ENCODE measurements at regions of chr17 and their contacts with region 1.

Region 1: GRCh38 chr17:27236717-27237315 is 57.1 kb upstream of the WSB1 start:
- DNase-seq: no peak
- ATAC-seq: peak; percentile 50
- H3K4me3 ChIP-seq: no peak overlapping the region
- H3K27ac ChIP-seq: no peak overlapping the region
- H3K4me1 ChIP-seq: peaks cover 28% of the 10 kb centered on the region
- H3K27me3 ChIP-seq: no peaks in the 10 kb centered on the region
- CTCF ChIP-seq: peak; percentile 81 to 88 (median 87)
- EP300 ChIP-seq: no peak
- POLR2A ChIP-seq: no peak
- RAD21 ChIP-seq: peak; percentile 94

Region 2: GRCh38 chr17:27206447-27206846 is 30.4 kb before region 1 on chr17:
- CTCF ChIA-PET with region 1: interaction called, 79 read pairs
- POLR2A ChIA-PET with region 1: no interaction called
- RAD21 ChIA-PET with region 1: interaction called, 27 read pairs
- SMC1A ChIA-PET with region 1: interaction called, 35 read pairs
- in situ Hi-C with region 1: no loop called
- intact Hi-C with region 1: no loop called
- DNase-seq: no peak
- ATAC-seq: peak; percentile 76
- H3K4me3 ChIP-seq: no peak overlapping the region
- H3K27ac ChIP-seq: no peak overlapping the region
- H3K4me1 ChIP-seq: no peaks in the 10 kb centered on the region
- H3K27me3 ChIP-seq: no peaks in the 10 kb centered on the region
- CTCF ChIP-seq: peak; percentile 9 to 55 (median 41); a peak in 4 of 6 replicates
- EP300 ChIP-seq: no peak
- POLR2A ChIP-seq: no peak
- RAD21 ChIP-seq: peak; percentile 19; the same call in 1 of the 2 replicates

Region 3: GRCh38 chr17:27293898-27294688 is 57.3 kb after region 1 on chr17 and contains the start of gene WSB1:
- CTCF ChIA-PET with region 1: interaction called, 80 read pairs
- POLR2A ChIA-PET with region 1: interaction called, 6 read pairs
- RAD21 ChIA-PET with region 1: interaction called, 20 read pairs
- SMC1A ChIA-PET with region 1: interaction called, 14 read pairs
- in situ Hi-C with region 1: no loop called
- intact Hi-C with region 1: loop called (anchors 2 kb)
- DNase-seq: peak; percentile 61
- ATAC-seq: peak; percentile 83
- H3K4me3 ChIP-seq: peak within 1 kb of the TSS; percentile 86
- H3K27ac ChIP-seq: peak within 1 kb of the TSS; percentile 97
- H3K4me1 ChIP-seq: peaks cover 11% of the 10 kb centered on the region
- H3K27me3 ChIP-seq: no peaks in the 10 kb centered on the region
- CTCF ChIP-seq: no peak
- EP300 ChIP-seq: peak; percentile 20 to 57; a peak in 2 of 4 replicates
- POLR2A ChIP-seq: peak; percentile 100
- RAD21 ChIP-seq: no peak
- polyA plus RNA-seq, gene WSB1: 26.6 to 49.8 TPM

Region 4: GRCh38 chr17:27339836-27340550 is 103.2 kb after region 1 on chr17:
- CTCF ChIA-PET with region 1: interaction called, 40 read pairs
- POLR2A ChIA-PET with region 1: no interaction called
- RAD21 ChIA-PET with region 1: interaction called, 156 read pairs
- SMC1A ChIA-PET with region 1: interaction called, 77 read pairs
- in situ Hi-C with region 1: loop called (anchors 5 kb)
- intact Hi-C with region 1: no loop called
- DNase-seq: no peak
- ATAC-seq: peak; percentile 46
- H3K4me3 ChIP-seq: peak overlapping the region; percentile 53; the same call in 1 of the 2 replicates
- H3K27ac ChIP-seq: peak overlapping the region; percentile 78
- H3K4me1 ChIP-seq: peaks cover 41% of the 10 kb centered on the region
- H3K27me3 ChIP-seq: no peaks in the 10 kb centered on the region
- CTCF ChIP-seq: no peak
- EP300 ChIP-seq: no peak
- POLR2A ChIP-seq: no peak
- RAD21 ChIP-seq: no peak

Region 5: DNA sequence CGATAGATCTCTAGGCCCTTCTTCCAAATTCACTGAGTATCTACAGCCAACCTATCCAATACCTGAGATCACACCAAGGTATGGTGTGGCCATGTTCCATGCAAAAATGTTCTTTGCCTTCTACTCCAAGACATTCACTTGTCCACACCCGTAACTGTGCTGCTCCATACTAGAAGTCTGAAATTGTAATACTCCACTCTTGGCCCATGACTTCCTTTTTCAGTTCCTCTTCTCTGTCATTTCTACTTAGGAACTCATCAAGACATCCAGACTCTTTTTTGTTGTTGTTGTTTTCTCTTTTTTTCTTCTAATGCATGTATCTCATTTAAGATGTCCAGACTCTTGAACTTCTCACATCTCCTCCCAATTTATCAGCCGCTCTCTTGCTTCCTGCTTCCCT is 177.0 kb after region 1 on chr17:
- CTCF ChIA-PET with region 1: interaction called, 8 read pairs
- POLR2A ChIA-PET with region 1: no interaction called
- RAD21 ChIA-PET with region 1: no interaction called
- SMC1A ChIA-PET with region 1: interaction called, 3 read pairs
- in situ Hi-C with region 1: loop called (anchors 10 kb)
- intact Hi-C with region 1: no loop called
- DNase-seq: no peak
- ATAC-seq: peak; percentile 74
- H3K4me3 ChIP-seq: no peak overlapping the region
- H3K27ac ChIP-seq: no peak overlapping the region
- H3K4me1 ChIP-seq: peaks cover 14% of the 10 kb centered on the region
- H3K27me3 ChIP-seq: peaks cover 1 to 2% of the 10 kb centered on the region in 2 experiments; a peak in 1 of 4 replicates
- CTCF ChIP-seq: no peak
- EP300 ChIP-seq: no peak
- POLR2A ChIP-seq: no peak
- RAD21 ChIP-seq: no peak

Region 6: GRCh38 chr17:27532269-27533263 is 295.8 kb after region 1 on chr17:
- CTCF ChIA-PET with region 1: no interaction called
- POLR2A ChIA-PET with region 1: no interaction called
- RAD21 ChIA-PET with region 1: no interaction called
- SMC1A ChIA-PET with region 1: no interaction called
- in situ Hi-C with region 1: no loop called
- intact Hi-C with region 1: no loop called
- DNase-seq: no peak
- ATAC-seq: no peak
- H3K4me3 ChIP-seq: no peak overlapping the region
- H3K27ac ChIP-seq: no peak overlapping the region
- H3K4me1 ChIP-seq: peaks cover 8% of the 10 kb centered on the region
- H3K27me3 ChIP-seq: no peaks in the 10 kb centered on the region
- CTCF ChIP-seq: no peak
- EP300 ChIP-seq: no peak
- POLR2A ChIP-seq: no peak
- RAD21 ChIP-seq: no peak

Region 7: DNA sequence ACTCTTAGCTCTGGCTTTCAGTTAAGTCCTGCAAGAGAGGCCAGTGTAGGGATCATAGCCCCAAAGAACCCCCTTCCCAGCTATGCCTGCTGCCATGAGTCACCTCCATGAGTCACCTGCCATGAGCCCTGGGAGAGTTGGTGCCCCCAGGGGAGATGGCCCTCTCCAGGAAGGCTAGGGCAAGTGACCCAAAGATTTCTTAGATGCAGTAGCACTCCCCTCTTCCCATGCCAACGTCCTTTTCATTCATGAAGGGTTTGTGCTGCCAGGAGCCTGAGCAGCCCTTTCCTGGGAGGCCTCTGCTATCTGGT is 315.6 kb after region 1 on chr17:
- CTCF ChIA-PET with region 1: no interaction called
- POLR2A ChIA-PET with region 1: no interaction called
- RAD21 ChIA-PET with region 1: no interaction called
- SMC1A ChIA-PET with region 1: no interaction called
- in situ Hi-C with region 1: no loop called
- intact Hi-C with region 1: no loop called
- DNase-seq: no peak
- ATAC-seq: no peak
- H3K4me3 ChIP-seq: no peak overlapping the region
- H3K27ac ChIP-seq: no peak overlapping the region
- H3K4me1 ChIP-seq: no peaks in the 10 kb centered on the region
- H3K27me3 ChIP-seq: no peaks in the 10 kb centered on the region
- CTCF ChIP-seq: no peak
- EP300 ChIP-seq: no peak
- POLR2A ChIP-seq: no peak
- RAD21 ChIP-seq: no peak

Region 8: GRCh38 chr17:27654654-27655524 is 418.1 kb after region 1 on chr17:
- CTCF ChIA-PET with region 1: interaction called, 59 read pairs
- POLR2A ChIA-PET with region 1: no interaction called
- RAD21 ChIA-PET with region 1: interaction called, 16 read pairs
- SMC1A ChIA-PET with region 1: interaction called, 21 read pairs
- in situ Hi-C with region 1: loop called (anchors 5 kb)
- intact Hi-C with region 1: loop called (anchors 5 kb)
- DNase-seq: peak; percentile 25
- ATAC-seq: peak; percentile 98
- H3K4me3 ChIP-seq: no peak overlapping the region
- H3K27ac ChIP-seq: no peak overlapping the region
- H3K4me1 ChIP-seq: no peaks in the 10 kb centered on the region
- H3K27me3 ChIP-seq: no peaks in the 10 kb centered on the region
- CTCF ChIP-seq: peak; percentile 67 to 90 (median 81)
- EP300 ChIP-seq: no peak
- POLR2A ChIP-seq: no peak
- RAD21 ChIP-seq: peak; percentile 57

Measured in GM12878 (cell line).